ENCODE measurements at regions of chr19 and their contacts with region 1.

Region 1: DNA sequence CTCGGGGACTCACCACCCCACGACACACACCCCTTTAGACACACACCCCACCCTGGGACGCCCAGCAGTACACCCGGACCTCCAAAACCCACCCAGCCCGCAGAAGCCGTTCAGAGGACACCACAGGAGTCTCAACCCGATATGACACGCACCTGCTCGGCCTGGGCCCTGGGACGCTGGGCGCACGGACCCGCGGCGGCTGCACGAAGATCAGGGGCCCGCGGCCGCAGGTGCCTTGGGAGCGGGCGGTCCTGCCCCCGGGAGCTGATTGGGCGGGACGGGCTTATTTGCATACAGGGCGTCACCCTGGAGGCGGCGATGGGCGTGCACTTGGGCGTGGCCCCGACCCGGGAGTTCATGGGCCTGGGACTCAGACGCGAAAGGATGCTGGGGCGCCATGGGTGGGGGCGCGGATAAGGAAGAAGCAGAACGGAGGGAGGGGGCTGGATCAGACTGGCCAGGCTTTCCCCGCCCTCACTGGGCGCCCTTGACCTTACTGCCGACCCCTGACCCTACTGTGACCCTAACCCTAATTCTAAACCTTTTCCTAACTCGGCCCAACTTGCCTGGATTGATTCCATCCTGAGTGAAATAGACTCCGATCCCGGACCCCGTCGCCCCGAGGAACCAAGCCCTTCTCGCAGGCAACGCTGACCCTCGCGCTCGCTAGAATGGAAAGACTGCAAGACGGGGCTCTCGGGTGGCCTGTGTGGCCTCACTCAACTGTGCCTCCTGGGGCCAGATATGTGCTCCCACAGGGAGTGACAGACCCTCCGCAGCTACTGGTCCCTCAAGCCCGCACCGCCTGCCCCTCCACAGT is at the start of gene MEF2B:
- DNase-seq: peak; percentile 56 to 84 (median 83)
- H3K4me3 ChIP-seq: peak within 1 kb of the TSS in 5 of 7 experiments; percentile 1 to 56 (median 19)
- H3K27ac ChIP-seq: no peak within 1 kb of the TSS
- H3K4me1 ChIP-seq: peaks cover 0 to 18% (median 10%) of the 10 kb centered on the region in 4 experiments
- H3K27me3 ChIP-seq: peaks cover 0 to 7% (median 2%) of the 10 kb centered on the region in 5 experiments

Region 2: GRCh38 chr19:19138169-19138981 is 31.9 kb before region 1 on chr19 and contains the start of gene TMEM161A:
- CTCF ChIA-PET with region 1: interaction called, 11 read pairs
- POLR2A ChIA-PET with region 1: no interaction called
- DNase-seq: peak; percentile 97 to 98 (median 98)
- H3K4me3 ChIP-seq: peak within 1 kb of the TSS; percentile 2 to 89 (median 72)
- H3K27ac ChIP-seq: peak within 1 kb of the TSS; percentile 41 to 67
- H3K4me1 ChIP-seq: peaks cover 0 to 24% (median 16%) of the 10 kb centered on the region in 4 experiments
- H3K27me3 ChIP-seq: no peaks in the 10 kb centered on the region

Region 3: DNA sequence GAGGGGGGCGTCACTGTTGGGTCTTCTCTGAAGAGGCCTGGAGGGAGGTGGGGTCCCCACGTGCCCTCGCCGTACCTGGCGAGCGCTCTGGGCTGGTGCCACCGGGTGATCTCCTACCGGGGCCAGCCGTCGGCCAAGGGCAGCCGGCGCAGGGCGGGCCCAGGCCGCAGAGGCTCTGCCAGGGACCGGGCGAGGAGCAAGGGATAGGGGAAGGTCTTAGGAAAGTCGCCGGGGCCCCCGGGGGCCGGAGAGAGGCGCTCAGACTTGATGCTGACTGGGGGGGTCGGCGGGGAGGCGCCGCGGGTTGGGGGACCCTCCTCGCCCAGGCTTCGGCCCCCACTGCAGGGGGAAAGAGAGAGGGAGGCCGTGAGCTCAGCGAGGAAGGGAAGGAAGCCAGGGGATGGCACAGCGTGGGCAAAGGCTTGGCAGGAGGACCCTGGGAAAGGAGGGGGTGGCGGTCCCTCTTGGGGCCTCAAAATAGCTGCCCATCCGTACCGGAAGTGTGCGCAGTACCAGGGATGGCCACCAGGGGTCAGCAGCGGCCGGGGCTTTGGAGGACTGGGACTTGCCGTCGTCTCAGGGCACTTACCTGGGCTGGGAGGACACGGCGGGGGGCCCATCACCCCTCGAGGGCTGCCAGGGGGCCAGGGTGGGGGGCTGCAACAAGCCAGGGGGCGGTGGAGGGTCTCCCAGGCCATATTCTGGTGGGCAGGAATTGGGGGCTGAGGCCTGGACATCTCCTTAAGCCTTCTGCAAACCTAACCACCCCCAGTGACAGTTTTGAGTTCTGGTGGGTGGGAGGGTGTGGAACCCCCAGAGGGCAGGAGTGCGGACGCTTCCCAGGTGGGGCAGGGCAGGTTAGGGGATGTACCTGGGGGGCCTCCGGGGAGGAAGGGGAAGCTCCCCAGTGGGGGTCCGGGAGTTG is 24.3 kb before region 1 on chr19:
- CTCF ChIA-PET with region 1: interaction called, 46 read pairs
- POLR2A ChIA-PET with region 1: no interaction called
- DNase-seq: peak; percentile 59 to 78 (median 71)
- H3K4me3 ChIP-seq: no peak overlapping the region
- H3K27ac ChIP-seq: no peak overlapping the region
- H3K4me1 ChIP-seq: peaks cover 0 to 3% (median 0%) of the 10 kb centered on the region in 4 experiments
- H3K27me3 ChIP-seq: no peaks in the 10 kb centered on the region

Region 4: GRCh38 chr19:19155495-19156219 is 14.6 kb before region 1 on chr19:
- CTCF ChIA-PET with region 1: interaction called, 46 read pairs
- POLR2A ChIA-PET with region 1: interaction called, 6 read pairs
- DNase-seq: peak in 1 of 3 donors; percentile 13
- H3K4me3 ChIP-seq: no peak overlapping the region
- H3K27ac ChIP-seq: no peak overlapping the region
- H3K4me1 ChIP-seq: peaks cover 0 to 15% (median 2%) of the 10 kb centered on the region in 4 experiments
- H3K27me3 ChIP-seq: no peaks in the 10 kb centered on the region

Region 5: DNA sequence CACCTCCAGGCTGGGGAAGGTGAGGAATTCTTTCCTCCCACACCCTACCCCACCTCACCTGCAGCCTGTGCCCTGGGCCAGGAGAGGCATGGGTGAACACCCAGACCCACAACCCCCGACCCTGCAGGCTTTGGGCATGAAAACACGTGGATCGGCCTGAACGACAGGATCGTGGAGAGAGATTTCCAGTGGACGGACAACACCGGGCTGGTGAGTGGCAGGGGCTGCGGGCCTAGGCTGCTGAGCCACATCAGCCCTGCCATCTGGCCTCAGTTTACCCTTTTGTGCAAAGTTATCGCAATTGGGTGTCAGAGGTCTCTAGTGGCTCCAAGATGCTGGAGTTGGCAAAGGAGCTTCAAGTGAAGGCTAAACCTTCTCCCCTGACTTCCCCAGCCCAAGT is 70.2 kb after region 1 on chr19:
- CTCF ChIA-PET with region 1: no interaction called
- POLR2A ChIA-PET with region 1: no interaction called
- DNase-seq: no peak
- H3K4me3 ChIP-seq: no peak overlapping the region
- H3K27ac ChIP-seq: no peak overlapping the region
- H3K4me1 ChIP-seq: no peaks in the 10 kb centered on the region
- H3K27me3 ChIP-seq: peaks cover 0 to 8% (median 0%) of the 10 kb centered on the region in 5 experiments